ENCODE measurements at regions of chr2 and their contacts with region 1.

Region 1: DNA sequence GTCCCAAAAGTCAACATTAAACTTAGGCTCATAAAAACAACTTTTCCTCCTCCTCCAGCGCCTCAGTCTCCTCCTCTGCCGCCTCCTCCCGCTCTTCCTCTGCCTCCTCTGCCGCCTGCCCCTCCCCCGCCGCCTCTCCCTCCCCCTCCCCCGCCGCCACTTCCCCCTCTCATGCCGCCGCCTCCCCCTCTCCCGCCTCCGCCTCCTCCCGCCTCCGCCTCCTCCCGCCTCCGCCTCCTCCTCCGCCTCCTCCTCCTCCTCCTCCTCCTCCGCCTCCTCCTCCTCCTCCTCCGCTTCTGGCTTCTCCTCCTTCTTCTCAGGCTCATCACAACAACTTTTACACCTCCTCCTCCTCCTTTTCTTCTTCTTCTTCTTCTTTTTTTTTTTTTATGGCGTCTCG is 599.9 kb downstream of the TMEM182 start:
- DNase-seq: no peak
- ATAC-seq: no peak
- H3K4me3 Mint-ChIP-seq: no peak overlapping the region
- H3K27ac Mint-ChIP-seq: no peak overlapping the region
- H3K4me1 Mint-ChIP-seq: no peaks in the 10 kb centered on the region
- H3K27me3 Mint-ChIP-seq: no peaks in the 10 kb centered on the region

Region 2: GRCh38 chr2:103346780-103347179 is 14.9 kb before region 1 on chr2:
- CTCF ChIA-PET with region 1: no interaction called
- POLR2A ChIA-PET with region 1: no interaction called
- intact Hi-C with region 1: loop called in 1 of 2 experiments (anchors 2 kb)
- DNase-seq: no peak
- ATAC-seq: no peak
- H3K4me3 Mint-ChIP-seq: no peak overlapping the region
- H3K27ac Mint-ChIP-seq: no peak overlapping the region
- H3K4me1 Mint-ChIP-seq: no peaks in the 10 kb centered on the region
- H3K27me3 Mint-ChIP-seq: no peaks in the 10 kb centered on the region

Measured in activated CD4-positive, alpha-beta T cell treated with anti-CD3 and anti-CD28 coated beads for 36 hours (primary cell).